ENCODE measurements at regions of chr17 and their contacts with region 1.

Region 1: DNA sequence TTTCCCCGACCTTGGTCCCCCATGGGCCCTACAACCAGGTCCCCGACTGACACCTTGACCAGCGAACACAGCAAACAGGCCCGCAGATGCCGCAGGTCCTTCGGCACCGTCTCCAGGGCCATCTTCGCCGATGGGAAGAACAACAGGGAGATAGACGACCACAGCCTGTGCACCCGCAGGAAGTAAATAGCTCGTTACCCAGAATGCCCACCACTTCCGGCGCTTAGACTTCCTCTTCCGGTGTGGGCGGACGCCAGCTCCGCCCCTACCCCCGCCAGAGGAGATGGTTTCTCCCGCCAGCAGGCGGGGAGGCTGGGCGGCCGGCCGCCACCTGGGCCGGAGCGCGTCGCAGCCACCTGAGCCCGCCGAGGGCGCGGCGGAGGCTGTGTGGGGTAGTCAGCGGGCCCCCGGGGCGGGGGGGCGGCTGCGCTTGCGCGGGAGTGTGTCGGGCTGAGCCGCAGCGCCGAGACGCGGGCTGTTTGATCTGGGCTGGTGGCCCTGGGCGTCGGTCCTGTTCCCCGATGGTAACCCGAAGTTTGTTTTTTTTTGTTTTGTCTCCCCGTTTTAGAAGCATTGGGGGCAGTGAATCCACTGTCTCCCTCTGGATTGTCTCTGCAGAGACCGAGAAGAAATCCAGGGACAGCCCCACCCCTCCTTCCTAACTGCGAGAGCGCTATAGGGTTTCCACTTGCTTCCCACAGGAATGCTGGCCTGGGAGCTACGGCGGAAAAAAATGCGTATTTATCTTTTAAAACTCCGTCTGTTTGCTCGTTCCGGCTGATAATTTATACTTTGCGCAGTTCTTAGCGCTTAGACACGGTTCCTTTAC is at the start of gene SUPT4H1:
- DNase-seq: peak; percentile 98
- ATAC-seq: peak; percentile 94
- H3K4me3 ChIP-seq: peak within 1 kb of the TSS; percentile 82 to 99 (median 91)
- H3K4me3 Mint-ChIP-seq: peak within 1 kb of the TSS; percentile 100
- H3K27ac ChIP-seq: peak within 1 kb of the TSS; percentile 91 to 95
- H3K27ac Mint-ChIP-seq: peak within 1 kb of the TSS; percentile 99
- H3K4me1 ChIP-seq: peaks cover 21 to 28% of the 10 kb centered on the region in 2 donors
- H3K4me1 Mint-ChIP-seq: peaks cover 47% of the 10 kb centered on the region
- H3K27me3 ChIP-seq: no peaks in the 10 kb centered on the region
- H3K27me3 Mint-ChIP-seq: no peaks in the 10 kb centered on the region
- CTCF ChIP-seq: no peak
- total RNA-seq, gene SUPT4H1: 49.3 and 60.1 TPM in 2 replicates

Region 2: GRCh38 chr17:58329035-58329809 is 23.0 kb before region 1 on chr17:
- CTCF ChIA-PET with region 1: interaction called, 587 read pairs
- POLR2A ChIA-PET with region 1: interaction called, 663 read pairs
- intact Hi-C with region 1: loop called (anchors 1 kb)
- DNase-seq: peak; percentile 88
- ATAC-seq: peak; percentile 37
- H3K4me3 ChIP-seq: peak overlapping the region; percentile 81 to 100 (median 99)
- H3K4me3 Mint-ChIP-seq: peak overlapping the region; percentile 91
- H3K27ac ChIP-seq: peak overlapping the region; percentile 73 to 85
- H3K27ac Mint-ChIP-seq: peak overlapping the region; percentile 93
- H3K4me1 ChIP-seq: peaks cover 36 to 69% of the 10 kb centered on the region in 2 donors
- H3K4me1 Mint-ChIP-seq: peaks cover 61% of the 10 kb centered on the region
- H3K27me3 ChIP-seq: no peaks in the 10 kb centered on the region
- H3K27me3 Mint-ChIP-seq: no peaks in the 10 kb centered on the region
- CTCF ChIP-seq: peak; percentile 79

Region 3: GRCh38 chr17:58337600-58338453 is 14.4 kb before region 1 on chr17:
- CTCF ChIA-PET with region 1: interaction called, 48 read pairs
- POLR2A ChIA-PET with region 1: interaction called, 663 read pairs
- intact Hi-C with region 1: loop called (anchors 1 kb)
- DNase-seq: peak; percentile 95
- ATAC-seq: peak; percentile 67
- H3K4me3 ChIP-seq: peak overlapping the region; percentile 75 to 100 (median 99)
- H3K4me3 Mint-ChIP-seq: peak overlapping the region; percentile 91
- H3K27ac ChIP-seq: peak overlapping the region; percentile 99 to 100
- H3K27ac Mint-ChIP-seq: peak overlapping the region; percentile 98
- H3K4me1 ChIP-seq: peaks cover 85 to 100% of the 10 kb centered on the region in 2 donors
- H3K4me1 Mint-ChIP-seq: peaks cover 88% of the 10 kb centered on the region
- H3K27me3 ChIP-seq: no peaks in the 10 kb centered on the region
- H3K27me3 Mint-ChIP-seq: no peaks in the 10 kb centered on the region
- CTCF ChIP-seq: peak; percentile 31

Region 4: DNA sequence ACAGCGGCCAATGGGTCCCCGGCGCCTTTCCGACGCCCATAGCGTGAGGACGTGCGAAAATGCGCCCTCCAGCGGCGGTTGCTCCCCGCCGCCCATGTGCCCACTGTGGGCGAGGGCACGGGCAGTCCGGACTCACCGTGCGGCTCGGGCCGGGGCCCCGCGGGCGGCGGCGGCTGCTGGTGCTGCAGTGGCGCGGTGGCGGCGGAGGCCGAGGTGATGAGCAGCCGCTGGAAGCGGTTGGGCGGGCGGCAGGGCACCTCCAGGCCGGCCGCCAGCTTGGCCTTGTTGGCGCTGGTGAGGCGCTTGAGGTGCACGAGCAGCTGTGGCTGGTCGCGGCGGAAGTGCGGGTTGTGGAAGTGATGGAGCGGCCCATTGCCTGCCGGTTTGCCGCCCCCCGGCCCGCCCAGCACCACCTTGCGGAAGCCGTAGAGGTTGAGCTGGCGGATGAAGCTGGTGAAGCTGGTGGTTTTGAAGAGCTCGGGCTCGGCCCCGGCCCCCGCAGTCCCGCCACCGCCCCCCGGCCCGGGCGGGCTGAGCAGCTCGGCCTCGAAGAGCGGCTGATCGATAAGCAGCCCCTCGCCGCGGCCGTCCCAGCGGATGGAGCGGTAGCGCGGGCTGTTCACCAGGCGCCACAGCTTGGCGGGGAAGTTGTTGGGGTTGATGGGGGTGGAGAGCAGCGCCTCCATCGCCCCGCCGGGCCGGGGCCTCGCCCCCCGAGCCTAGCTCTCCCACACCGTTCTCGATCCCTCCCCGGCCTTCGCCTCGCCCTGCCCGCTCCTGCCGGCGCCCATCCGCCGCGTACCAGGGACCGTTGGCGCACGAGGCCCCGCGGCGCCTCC is 135.6 kb after region 1 on chr17 and contains the start of gene HSF5:
- CTCF ChIA-PET with region 1: interaction called, 14 read pairs
- POLR2A ChIA-PET with region 1: no interaction called
- intact Hi-C with region 1: no loop called
- DNase-seq: peak; percentile 92
- ATAC-seq: peak; percentile 94
- H3K4me3 ChIP-seq: peak within 1 kb of the TSS in 4 of 5 experiments; percentile 40 to 60 (median 56)
- H3K4me3 Mint-ChIP-seq: peak within 1 kb of the TSS; percentile 86
- H3K27ac ChIP-seq: peak within 1 kb of the TSS; percentile 13 to 79
- H3K27ac Mint-ChIP-seq: peak within 1 kb of the TSS; percentile 83
- H3K4me1 ChIP-seq: peaks cover 6 to 11% of the 10 kb centered on the region in 2 donors
- H3K4me1 Mint-ChIP-seq: peaks cover 11% of the 10 kb centered on the region
- H3K27me3 ChIP-seq: no peaks in the 10 kb centered on the region
- H3K27me3 Mint-ChIP-seq: no peaks in the 10 kb centered on the region
- CTCF ChIP-seq: peak; percentile 81
- total RNA-seq, gene HSF5: 4.8 and 5.1 TPM in 2 replicates

Measured in B cell (primary cell).